Posterior vena cava (tissue), 2 donors: ENCODE measurements at regions of chr11 and their contacts with region 1.

Region 1: DNA sequence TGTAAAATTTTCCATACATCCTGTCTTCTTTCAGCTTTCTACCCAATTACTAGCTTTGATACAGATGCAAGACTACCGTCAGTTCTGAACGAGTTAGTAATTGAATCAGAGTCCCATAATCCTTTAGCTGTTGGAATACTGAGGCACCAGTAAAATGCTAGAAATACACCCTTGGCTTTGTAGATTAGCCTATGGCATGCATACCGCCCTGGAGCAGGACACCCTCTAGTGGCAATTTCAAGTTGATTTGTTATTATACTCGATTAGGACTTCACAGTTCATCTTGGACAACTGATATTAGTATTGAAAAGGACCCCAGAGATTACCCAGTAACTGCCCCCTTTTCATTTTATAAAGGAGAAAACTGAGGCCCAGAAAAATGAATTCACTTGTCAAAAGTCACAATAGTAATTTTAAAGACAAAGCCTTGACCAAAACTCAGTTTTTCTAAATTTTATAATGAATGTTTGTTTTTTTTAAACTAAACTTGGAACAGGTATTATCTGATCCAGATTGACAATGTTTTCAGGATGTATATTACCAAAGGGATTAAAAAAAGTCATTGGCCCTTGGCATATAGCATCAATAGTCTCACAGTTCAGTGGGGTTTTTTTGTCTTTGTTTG is 72.6 kb downstream of the HIPK3 start:
- DNase-seq: no peak

Region 2: GRCh38 chr11:32121012-32121411 is 1208.8 kb before region 1 on chr11:
- intact Hi-C with region 1: no loop called
- DNase-seq: no peak

Region 3: GRCh38 chr11:33161120-33162005 is 168.5 kb before region 1 on chr11 and contains the start of gene CSTF3:
- intact Hi-C with region 1: loop called (anchors 2 to 10 kb)
- DNase-seq: peak; percentile 100
- total RNA-seq, gene CSTF3: 15.9 to 17.5 TPM

Region 4: GRCh38 chr11:33257897-33258630 is 71.8 kb before region 1 on chr11:
- intact Hi-C with region 1: loop called in 1 of 2 experiments (anchors 5 kb)
- DNase-seq: peak; percentile 97